ENCODE measurements at regions of chr2 and their contacts with region 1.

Region 1: GRCh38 chr2:42132966-42133641 is 36.0 kb upstream of the EML4 start:
- DNase-seq: peak; percentile 89
- ATAC-seq: peak; percentile 90
- H3K4me3 ChIP-seq: peak overlapping the region in 4 of 5 experiments; percentile 2 to 36 (median 15)
- H3K4me3 Mint-ChIP-seq: peak overlapping the region; percentile 81
- H3K27ac ChIP-seq: peak overlapping the region; percentile 71 to 73
- H3K27ac Mint-ChIP-seq: peak overlapping the region; percentile 94
- H3K4me1 ChIP-seq: peaks cover 71% of the 10 kb centered on the region in 2 donors
- H3K4me1 Mint-ChIP-seq: peaks cover 74% of the 10 kb centered on the region
- H3K27me3 ChIP-seq: no peaks in the 10 kb centered on the region
- H3K27me3 Mint-ChIP-seq: no peaks in the 10 kb centered on the region
- CTCF ChIP-seq: no peak

Region 2: GRCh38 chr2:42117923-42118753 is 15.0 kb before region 1 on chr2:
- CTCF ChIA-PET with region 1: interaction called, 10 read pairs
- POLR2A ChIA-PET with region 1: interaction called, 11 read pairs
- intact Hi-C with region 1: loop called (anchors 2 kb)
- DNase-seq: peak; percentile 83
- ATAC-seq: peak; percentile 87
- H3K4me3 ChIP-seq: peak overlapping the region in 3 of 5 experiments; percentile 7 to 16 (median 11)
- H3K4me3 Mint-ChIP-seq: peak overlapping the region; percentile 40
- H3K27ac ChIP-seq: peak overlapping the region; percentile 62 to 75
- H3K27ac Mint-ChIP-seq: peak overlapping the region; percentile 69
- H3K4me1 ChIP-seq: peaks cover 48% of the 10 kb centered on the region in 2 donors
- H3K4me1 Mint-ChIP-seq: peaks cover 61% of the 10 kb centered on the region
- H3K27me3 ChIP-seq: no peaks in the 10 kb centered on the region
- H3K27me3 Mint-ChIP-seq: no peaks in the 10 kb centered on the region
- CTCF ChIP-seq: no peak

Region 3: DNA sequence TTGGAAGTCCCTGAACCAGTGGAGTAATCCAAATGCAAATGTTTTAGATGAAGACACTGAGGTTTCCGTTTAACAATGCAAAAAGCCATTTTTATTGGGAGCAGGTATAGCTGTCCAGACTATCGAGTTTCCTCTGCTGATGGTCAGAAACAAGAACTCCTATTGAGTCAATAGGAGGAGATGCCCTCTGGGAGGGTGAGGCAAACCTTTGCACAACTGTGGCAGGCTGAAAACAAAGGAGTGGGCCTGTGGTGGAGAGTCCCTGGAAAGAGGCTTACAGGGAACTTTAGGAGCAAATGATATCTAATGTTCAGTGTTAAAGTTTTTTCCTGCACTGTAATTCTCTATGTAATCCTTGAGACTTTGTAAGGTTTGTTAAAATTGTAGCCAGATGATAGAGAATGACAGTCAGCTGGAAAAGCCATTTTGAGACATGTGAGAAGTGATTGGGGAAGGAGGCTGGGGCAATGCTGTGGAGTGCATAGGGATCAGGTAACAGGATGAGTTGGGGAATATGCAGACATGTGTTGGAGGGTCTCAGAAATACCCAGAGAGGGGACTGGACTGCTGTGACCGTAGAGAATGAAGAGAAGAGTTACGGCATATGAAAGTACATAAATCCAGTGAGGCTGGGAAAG is 21.0 kb after region 1 on chr2:
- CTCF ChIA-PET with region 1: no interaction called
- POLR2A ChIA-PET with region 1: no interaction called
- intact Hi-C with region 1: no loop called
- DNase-seq: no peak
- ATAC-seq: no peak
- H3K4me3 ChIP-seq: no peak overlapping the region
- H3K4me3 Mint-ChIP-seq: no peak overlapping the region
- H3K27ac ChIP-seq: no peak overlapping the region
- H3K27ac Mint-ChIP-seq: no peak overlapping the region
- H3K4me1 ChIP-seq: no peaks in the 10 kb centered on the region
- H3K4me1 Mint-ChIP-seq: peaks cover 6% of the 10 kb centered on the region
- H3K27me3 ChIP-seq: no peaks in the 10 kb centered on the region
- H3K27me3 Mint-ChIP-seq: no peaks in the 10 kb centered on the region
- CTCF ChIP-seq: no peak

Region 4: DNA sequence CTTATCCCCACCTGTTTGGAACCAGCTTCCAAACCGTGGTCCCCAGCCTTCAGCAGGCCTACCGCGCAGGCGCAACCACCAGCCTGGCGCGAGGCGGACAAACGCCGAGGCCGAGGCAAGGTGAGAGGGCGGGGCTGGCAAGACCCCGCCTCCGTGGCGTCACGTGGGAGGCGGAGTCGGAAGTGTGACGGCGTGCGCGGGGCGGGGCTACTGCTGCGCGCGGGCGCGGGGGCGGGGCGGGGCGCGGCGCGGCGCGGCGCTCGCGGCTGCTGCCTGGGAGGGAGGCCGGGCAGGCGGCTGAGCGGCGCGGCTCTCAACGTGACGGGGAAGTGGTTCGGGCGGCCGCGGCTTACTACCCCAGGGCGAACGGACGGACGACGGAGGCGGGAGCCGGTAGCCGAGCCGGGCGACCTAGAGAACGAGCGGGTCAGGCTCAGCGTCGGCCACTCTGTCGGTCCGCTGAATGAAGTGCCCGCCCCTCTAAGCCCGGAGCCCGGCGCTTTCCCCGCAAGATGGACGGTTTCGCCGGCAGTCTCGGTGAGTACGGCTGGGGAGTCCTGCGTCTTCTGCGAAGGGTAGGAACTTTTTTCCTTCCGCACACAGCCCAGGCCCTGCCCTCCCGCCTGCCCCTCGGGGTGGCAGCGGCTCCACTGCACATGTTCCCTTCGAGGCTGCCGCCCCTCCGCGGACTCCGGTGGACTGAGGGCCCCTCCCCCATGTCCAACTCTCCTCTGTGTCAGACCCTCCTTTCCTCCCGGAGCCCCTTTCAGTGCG is 36.2 kb after region 1 on chr2 and contains the start of gene EML4:
- CTCF ChIA-PET with region 1: interaction called, 5 read pairs
- POLR2A ChIA-PET with region 1: interaction called, 5 read pairs
- intact Hi-C with region 1: loop called (anchors 1 kb)
- DNase-seq: peak; percentile 96
- ATAC-seq: peak; percentile 89
- H3K4me3 ChIP-seq: peak within 1 kb of the TSS; percentile 77 to 98 (median 88)
- H3K4me3 Mint-ChIP-seq: no peak within 1 kb of the TSS
- H3K27ac ChIP-seq: peak within 1 kb of the TSS; percentile 88 to 91
- H3K27ac Mint-ChIP-seq: no peak within 1 kb of the TSS
- H3K4me1 ChIP-seq: peaks cover 38 to 40% of the 10 kb centered on the region in 2 donors
- H3K4me1 Mint-ChIP-seq: peaks cover 28% of the 10 kb centered on the region
- H3K27me3 ChIP-seq: no peaks in the 10 kb centered on the region
- H3K27me3 Mint-ChIP-seq: no peaks in the 10 kb centered on the region
- CTCF ChIP-seq: no peak
- total RNA-seq, gene EML4: 134 and 138 TPM in 2 replicates

Measured in B cell (primary cell).